GM18951 (cell line): ENCODE measurements at regions of chrX and their contacts with region 1.

Region 1: DNA sequence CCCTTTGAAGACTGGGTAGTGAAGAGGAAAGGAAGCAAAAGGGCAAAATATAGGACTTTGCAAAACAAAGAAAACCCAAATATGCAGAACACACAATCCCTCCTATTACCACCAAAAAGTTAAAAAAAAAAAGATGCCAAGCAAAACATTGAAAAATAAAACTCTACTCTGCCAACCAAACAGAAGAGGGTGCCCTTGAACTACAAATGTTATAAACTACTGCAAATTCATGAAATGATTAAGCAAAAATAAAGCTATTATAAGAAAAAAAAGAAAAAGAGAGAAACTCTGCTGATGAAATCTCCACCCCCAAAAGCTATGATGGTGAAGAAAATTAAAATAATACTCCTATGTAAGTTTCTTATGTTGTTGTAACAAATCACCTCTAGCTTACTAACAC is 168.5 kb upstream of the STK26 start:
- POLR2A ChIP-seq: no peak

Region 2: GRCh38 chrX:132219343-132219768 is 364.8 kb after region 1 on chrX and contains the start of gene RAP2C:
- in situ Hi-C with region 1: loop called (anchors 25 kb)
- POLR2A ChIP-seq: no peak